ENCODE measurements at regions of chr1 and their contacts with region 1.

Region 1: GRCh38 chr1:198175423-198176170 is 18.8 kb downstream of the NEK7 start:
- DNase-seq: peak; percentile 71
- H3K4me3 Mint-ChIP-seq: peak overlapping the region; percentile 45
- H3K27ac Mint-ChIP-seq: peak overlapping the region; percentile 23
- H3K4me1 Mint-ChIP-seq: peaks cover 69% of the 10 kb centered on the region
- H3K27me3 Mint-ChIP-seq: no peaks in the 10 kb centered on the region

Region 2: DNA sequence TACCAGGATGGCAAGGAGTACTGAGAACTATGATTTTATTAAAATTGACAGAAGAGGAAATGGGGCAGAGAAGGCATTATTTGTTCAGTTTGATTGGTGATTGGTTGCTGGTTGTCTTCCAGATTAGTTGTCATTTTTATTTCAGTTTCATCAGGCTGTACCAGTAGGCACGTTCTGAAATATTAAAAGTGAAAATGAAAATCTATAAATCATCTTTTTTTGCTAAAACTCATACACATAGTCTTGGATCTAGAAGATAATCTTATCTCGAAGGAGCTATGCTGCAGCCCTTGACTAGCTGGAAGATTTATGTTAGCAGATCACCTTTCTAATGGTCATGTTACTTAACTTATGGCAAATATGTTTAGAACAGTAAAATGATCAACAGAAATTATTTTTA is 10.2 kb after region 1 on chr1:
- intact Hi-C with region 1: loop called (anchors 1 kb)
- DNase-seq: no peak
- H3K4me3 Mint-ChIP-seq: peak overlapping the region; percentile 66
- H3K27ac Mint-ChIP-seq: peak overlapping the region; percentile 58
- H3K4me1 Mint-ChIP-seq: peaks cover 48% of the 10 kb centered on the region
- H3K27me3 Mint-ChIP-seq: no peaks in the 10 kb centered on the region

Measured in activated CD4-positive, alpha-beta T cell treated with anti-CD3 and anti-CD28 coated beads, Interleukin-2, amount 10 ng/mL, durations not matched to agents 24 days and 14 days (primary cell).